ENCODE measurements at regions of chr3 and their contacts with region 1.

Region 1: GRCh38 chr3:71168880-71169411 is 414.6 kb downstream of the FOXP1 start:
- DNase-seq: no peak
- H3K4me3 ChIP-seq: peak overlapping the region; percentile 1
- H3K4me3 Mint-ChIP-seq: peak overlapping the region; percentile 58
- H3K27ac Mint-ChIP-seq: peak overlapping the region; percentile 83
- H3K4me1 ChIP-seq: peaks cover 81% of the 10 kb centered on the region
- H3K4me1 Mint-ChIP-seq: peaks cover 66% of the 10 kb centered on the region
- H3K27me3 ChIP-seq: no peaks in the 10 kb centered on the region
- H3K27me3 Mint-ChIP-seq: no peaks in the 10 kb centered on the region
- CTCF ChIP-seq: no peak

Region 2: DNA sequence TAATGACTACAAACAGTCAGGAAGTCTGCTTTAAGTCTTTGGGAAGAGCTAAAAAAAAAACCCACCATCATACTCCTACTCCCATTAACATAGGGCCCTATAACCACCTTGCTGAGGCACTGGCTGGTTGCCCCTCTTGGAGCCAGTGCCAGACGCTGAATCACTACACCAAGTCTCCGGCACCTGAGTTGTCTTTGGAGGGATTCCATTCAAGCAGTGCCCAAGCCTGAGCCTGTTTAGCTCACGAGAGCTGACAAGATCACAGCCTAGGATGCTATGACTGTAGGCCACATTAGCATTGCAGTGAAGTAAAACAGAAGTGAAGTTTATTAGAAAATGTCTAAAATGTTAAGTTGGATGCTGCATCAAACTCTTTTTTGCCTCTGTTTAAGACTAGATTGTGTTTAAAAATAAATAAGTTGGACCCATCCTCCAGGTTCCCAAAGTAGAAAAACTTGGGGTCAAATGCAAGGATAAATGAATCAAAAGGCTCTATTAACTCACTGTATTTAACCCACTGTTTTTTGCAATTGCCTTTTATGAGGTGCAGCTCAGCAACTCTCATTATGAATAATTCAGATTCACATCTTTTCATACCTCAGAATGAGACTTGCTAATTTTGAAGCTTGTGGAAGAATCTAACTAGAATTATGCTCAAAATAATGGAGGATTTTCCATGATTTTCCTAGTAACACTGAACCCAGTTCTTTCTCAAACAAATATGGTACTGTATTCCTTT is 47.3 kb before region 1 on chr3:
- CTCF ChIA-PET with region 1: no interaction called
- POLR2A ChIA-PET with region 1: no interaction called
- intact Hi-C with region 1: loop called (anchors 2 kb)
- DNase-seq: no peak
- H3K4me3 ChIP-seq: no peak overlapping the region
- H3K4me3 Mint-ChIP-seq: no peak overlapping the region
- H3K27ac Mint-ChIP-seq: peak overlapping the region; percentile 71
- H3K4me1 ChIP-seq: peaks cover 57% of the 10 kb centered on the region
- H3K4me1 Mint-ChIP-seq: peaks cover 52% of the 10 kb centered on the region
- H3K27me3 ChIP-seq: no peaks in the 10 kb centered on the region
- H3K27me3 Mint-ChIP-seq: no peaks in the 10 kb centered on the region
- CTCF ChIP-seq: no peak